AG04450 (cell line): ENCODE measurements at regions of chr20 and their contacts with region 1.

Region 1: DNA sequence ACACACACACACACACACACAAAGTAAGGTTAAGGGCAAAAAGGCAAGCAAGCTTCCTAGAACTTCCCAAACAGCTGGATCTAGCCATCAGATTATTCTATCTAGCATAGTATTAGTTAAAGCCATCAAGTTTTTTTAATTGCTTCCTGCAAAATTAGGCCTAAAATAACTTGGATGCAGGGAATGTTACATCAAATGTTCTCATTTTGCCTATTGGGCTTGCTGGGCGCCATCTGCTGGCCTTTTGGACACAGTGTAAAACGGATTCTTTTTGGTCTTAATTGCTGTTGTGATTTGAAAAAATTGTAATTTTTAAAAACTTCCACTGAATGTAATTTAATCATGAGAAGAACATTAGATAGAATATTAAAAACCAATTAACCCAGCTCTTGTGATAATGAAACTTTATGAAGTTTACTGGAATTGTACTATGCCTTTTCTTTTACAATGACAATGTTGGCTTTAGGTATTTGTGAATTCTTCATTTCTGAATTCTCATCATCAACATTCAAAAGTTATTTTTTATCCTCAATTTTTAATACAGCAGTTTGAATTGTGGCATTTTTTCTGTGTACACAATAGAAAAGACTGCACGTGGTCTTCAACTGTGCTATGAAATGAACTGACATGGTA is 6.8 kb downstream of the MKKS start:
- DNase-seq: peak; percentile 34
- H3K4me3 ChIP-seq: no peak overlapping the region
- H3K27ac ChIP-seq: no peak overlapping the region
- H3K27me3 ChIP-seq: no peaks in the 10 kb centered on the region
- CTCF ChIP-seq: peak; percentile 90

Region 2: DNA sequence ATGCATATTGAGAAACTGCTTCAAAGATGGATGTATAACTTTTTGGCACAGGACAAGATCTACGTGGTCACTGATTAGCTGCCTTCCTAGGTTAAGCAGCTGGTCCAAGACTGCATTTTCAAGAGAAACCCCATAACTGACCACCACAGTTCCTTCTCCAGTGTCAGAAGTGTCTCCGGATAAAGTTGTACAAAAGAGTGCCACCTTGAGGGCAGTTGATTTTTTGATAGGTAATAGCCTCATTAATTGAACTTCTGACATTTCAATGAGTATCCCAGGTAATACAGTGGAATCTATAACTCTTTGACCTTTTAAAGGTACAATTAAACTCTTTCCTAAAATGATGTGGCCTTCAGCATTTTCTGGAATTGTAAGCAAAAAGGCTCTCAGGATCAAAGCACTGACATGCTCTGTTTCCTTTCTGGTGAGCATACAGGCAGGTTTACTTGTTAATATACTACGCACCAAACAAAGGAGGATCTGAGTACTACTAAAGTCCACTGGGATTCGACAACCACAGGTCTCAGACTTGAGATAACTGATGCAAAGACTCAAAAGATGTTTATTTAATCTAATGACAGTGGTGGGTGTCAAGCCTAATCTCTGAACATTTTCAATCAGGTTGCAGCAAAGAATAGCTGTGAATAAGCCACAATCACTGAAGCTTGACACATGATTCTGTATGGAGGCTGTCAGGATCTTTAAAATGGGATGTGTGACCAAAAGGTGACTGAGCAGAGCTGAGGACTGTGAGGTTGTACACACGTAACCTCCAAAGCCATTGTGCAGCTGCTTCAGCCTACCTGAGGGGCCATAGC is 14.4 kb before region 1 on chr20:
- CTCF ChIA-PET with region 1: interaction called, 22 read pairs
- POLR2A ChIA-PET with region 1: no interaction called
- DNase-seq: no peak
- H3K4me3 ChIP-seq: no peak overlapping the region
- H3K27ac ChIP-seq: no peak overlapping the region
- H3K27me3 ChIP-seq: no peaks in the 10 kb centered on the region
- CTCF ChIP-seq: peak; percentile 37

Region 3: DNA sequence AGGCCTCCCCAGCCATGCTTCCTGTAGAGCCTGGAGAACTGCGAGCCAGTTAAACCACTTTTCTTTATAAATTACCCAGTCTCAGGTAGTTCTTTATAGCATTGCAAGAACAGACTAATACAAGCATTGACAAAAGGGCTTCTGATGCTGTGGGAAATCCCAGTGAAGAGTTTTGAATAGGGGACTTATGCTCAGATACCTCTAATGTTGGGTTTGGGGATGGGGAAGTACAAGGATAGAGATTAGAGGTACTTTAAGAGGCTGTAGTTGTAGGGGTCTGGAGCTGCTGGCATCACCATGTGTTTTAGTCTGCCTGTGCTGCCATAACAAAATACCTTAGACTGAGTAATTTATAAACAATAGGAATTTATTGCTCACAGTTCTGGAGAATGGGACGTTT is 16.8 kb after region 1 on chr20:
- CTCF ChIA-PET with region 1: interaction called, 10 read pairs
- POLR2A ChIA-PET with region 1: no interaction called
- DNase-seq: no peak
- H3K4me3 ChIP-seq: no peak overlapping the region
- H3K27ac ChIP-seq: no peak overlapping the region
- H3K27me3 ChIP-seq: no peaks in the 10 kb centered on the region
- CTCF ChIP-seq: no peak